ENCODE measurements at regions of chr10 and their contacts with region 1.

Region 1: GRCh38 chr10:123994417-123995081 is 98.8 kb downstream of the CHST15 start:
- DNase-seq: peak; percentile 65
- H3K4me3 Mint-ChIP-seq: no peak overlapping the region
- H3K27ac Mint-ChIP-seq: no peak overlapping the region
- H3K4me1 Mint-ChIP-seq: peaks cover 6% of the 10 kb centered on the region
- H3K27me3 Mint-ChIP-seq: peaks cover 51% of the 10 kb centered on the region

Region 2: DNA sequence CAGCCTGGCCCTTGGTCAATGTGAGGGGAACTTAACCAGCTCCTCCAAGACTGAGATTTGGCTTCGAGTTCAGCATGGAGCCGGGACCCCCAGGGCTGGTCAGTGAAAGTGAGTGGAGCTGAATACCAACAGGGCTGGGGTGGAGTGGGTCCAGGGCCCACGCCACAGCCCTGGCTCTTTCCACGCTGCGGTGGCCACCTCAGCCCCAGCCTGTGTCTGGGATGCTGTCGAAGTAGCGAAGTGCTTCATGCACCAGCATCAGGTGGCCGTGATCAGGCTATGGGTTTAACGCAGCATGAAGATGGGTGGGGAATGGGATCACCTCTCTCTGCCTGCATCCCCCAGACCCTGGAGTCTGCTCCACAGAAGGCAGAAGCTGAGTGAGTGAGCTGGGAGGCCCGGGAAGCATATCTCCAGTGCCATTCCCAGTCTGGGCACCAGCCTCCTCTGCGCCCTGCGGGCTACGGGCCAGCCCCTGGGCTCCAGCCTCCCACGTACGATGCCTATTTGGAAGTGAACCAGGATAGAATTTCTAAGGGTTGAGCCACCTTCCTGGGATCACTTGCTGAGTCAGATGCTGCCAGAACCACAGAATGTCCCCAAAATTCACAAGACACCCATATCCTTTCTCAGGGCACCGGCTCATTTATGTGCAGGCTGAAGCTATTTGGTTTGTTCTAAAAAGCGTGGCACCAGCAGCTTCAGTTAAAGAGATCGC is 229.9 kb after region 1 on chr10:
- intact Hi-C with region 1: loop called (anchors 1 kb)
- DNase-seq: no peak
- H3K4me3 Mint-ChIP-seq: no peak overlapping the region
- H3K27ac Mint-ChIP-seq: no peak overlapping the region
- H3K4me1 Mint-ChIP-seq: peaks cover 14% of the 10 kb centered on the region
- H3K27me3 Mint-ChIP-seq: peaks cover 3% of the 10 kb centered on the region

Measured in activated T-helper 2 cell treated with anti-CD3 and anti-CD28 coated beads, Interferon-gamma antibody, Interleukin-2, Interleukin-4, amounts not matched to agents 10 μg/mL and 5 μg/mL and 100 μg/mL, durations not matched to agents 14 hours and 24 hours and 36 hours (primary cell).